ENCODE measurements at regions of chr7 and their contacts with region 1.

Region 1: DNA sequence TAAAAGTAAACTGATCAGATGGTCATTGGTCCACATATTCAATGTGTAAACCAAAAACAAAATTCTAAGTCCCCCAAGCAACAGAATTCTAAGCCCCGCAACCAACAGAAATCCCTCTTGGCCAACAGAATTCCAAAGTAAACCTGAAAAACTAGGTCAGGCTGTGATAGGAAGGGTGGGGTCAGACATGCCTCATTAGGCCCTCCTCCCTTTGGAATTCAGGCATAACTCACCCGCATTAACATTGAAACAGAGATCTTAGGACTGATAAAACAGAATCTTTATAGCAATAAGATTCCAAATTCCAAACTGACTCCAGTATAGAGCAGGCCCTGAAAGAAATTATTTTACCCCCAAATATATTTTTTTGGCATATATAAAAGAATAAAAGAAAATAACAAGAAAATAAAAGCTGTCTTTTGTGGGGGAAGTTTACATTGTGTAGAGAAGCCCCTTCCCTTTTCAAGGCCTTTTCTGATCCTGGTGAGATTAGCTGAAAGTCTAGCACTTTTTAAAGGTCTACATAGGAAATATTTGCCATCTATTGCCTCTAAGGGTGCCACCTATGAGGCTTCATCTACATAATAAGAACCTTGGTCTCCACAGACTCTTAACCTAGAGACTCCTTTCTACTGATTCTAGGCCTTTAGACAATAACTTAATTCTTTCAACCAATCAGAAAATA is 30.5 kb downstream of the GNAT3 start:
- DNase-seq: peak in 1 of 3 donors; percentile 14
- ATAC-seq: peak in 1 of 2 donors; percentile 20
- H3K4me3 ChIP-seq: no peak overlapping the region
- H3K27ac ChIP-seq: no peak overlapping the region
- H3K4me1 ChIP-seq: peaks cover 3% of the 10 kb centered on the region
- H3K27me3 ChIP-seq: no peaks in the 10 kb centered on the region

Region 2: DNA sequence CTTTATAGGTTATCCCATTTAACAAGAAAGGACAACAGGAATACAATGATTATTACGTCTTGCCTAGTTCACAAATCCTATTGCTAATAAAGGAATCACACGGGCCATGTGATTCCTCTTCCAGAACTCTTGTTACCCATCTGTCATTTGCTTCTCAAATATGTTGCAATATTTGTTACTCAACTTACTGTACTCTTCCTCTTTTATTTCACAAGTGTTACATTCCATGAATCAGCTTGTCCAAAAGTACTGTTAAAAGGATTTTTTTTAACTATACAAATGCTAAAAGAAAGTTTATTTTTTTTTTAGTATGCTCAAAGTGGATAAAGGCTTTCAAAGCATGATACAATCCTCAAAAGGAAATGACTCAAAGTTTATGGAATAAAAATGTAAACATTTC is 153.2 kb after region 1 on chr7:
- intact Hi-C with region 1: loop called in 1 of 4 experiments (anchors 10 kb)
- DNase-seq: no peak
- ATAC-seq: peak; percentile 67 to 68
- H3K4me3 ChIP-seq: no peak overlapping the region
- H3K27ac ChIP-seq: no peak overlapping the region
- H3K4me1 ChIP-seq: peaks cover 2% of the 10 kb centered on the region
- H3K27me3 ChIP-seq: no peaks in the 10 kb centered on the region

Measured in right cardiac atrium (tissue), 5 donors.